HCT116 (cell line): ENCODE measurements at regions of chr11 and their contacts with region 1.

Region 1: DNA sequence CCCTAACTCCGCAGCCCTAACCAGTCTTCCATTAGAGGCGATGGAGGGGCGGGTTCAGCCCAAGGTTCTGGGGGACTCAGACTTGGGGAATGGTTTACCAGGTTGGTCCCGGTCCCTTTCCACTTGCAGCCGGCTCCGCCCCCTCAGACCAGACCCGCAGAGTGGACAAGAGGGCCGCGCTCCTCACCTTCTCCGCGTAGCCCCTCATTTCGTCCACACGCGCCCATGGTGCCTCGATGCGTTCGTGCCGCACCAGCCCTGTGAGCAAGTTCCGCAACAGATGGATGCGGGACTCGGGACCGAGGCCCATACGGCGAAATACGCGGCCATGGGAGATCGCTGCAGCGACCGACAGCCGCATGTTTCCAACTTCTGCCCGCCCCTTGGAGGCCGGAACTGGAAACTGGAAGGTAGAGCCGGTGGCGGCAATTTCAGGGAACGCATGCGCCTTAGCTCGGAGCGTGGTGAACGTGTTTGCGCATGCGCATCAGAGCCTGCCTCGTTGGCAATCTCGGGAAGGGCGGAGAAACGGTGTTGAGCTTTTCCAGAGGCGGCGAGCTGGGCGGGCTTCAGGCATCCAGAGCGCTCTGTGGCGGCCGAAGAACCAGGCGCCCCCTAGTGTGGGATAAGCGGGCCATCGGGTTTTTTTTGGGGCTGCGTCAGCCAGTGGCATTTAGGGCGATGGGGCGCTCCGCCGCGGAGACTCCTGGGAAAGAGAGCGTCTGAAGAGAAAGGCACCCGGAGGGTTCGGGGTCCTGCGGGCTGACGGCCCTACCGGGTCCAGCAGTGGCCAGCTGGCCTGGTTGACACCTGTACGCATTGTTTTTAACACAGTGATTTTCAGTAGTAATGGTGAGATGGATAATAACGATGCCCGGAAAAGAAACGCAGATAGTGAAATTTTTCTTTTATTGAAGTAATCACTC is at the start of gene MRPL17:
- DNase-seq: peak; percentile 99
- ATAC-seq: peak; percentile 96
- H3K4me3 ChIP-seq: peak within 1 kb of the TSS; percentile 71 to 92
- H3K27ac ChIP-seq: peak within 1 kb of the TSS; percentile 66
- H3K4me1 ChIP-seq: peaks cover 7 to 15% of the 10 kb centered on the region in 2 experiments; a peak in 3 of 4 replicates
- H3K27me3 ChIP-seq: no peaks in the 10 kb centered on the region
- CTCF ChIP-seq: peak; percentile 84 to 91 (median 85)
- POLR2A ChIP-seq: peak; percentile 95
- RAD21 ChIP-seq: peak; percentile 81
- total RNA-seq, gene MRPL17: 75.0 TPM

Region 2: DNA sequence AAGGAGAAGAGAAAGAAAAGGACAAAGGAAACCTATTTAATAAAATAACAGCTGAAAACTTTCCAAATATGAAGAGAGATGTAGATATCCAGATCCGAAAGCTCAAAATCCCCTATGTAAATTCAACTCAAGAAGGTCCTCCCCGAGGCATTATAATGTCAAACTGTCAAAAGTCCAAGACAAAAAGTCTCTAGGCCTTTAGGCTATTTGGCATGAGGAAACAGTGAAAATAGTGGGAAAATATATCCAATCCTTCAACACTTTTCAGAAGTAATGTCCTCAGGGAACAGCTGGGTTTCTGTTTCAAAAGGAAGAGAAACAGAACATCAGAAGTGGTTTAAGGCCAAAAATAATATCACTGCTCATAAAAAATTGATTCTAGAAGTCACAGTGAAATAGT is 804.6 kb before region 1 on chr11:
- CTCF ChIA-PET with region 1: no interaction called
- POLR2A ChIA-PET with region 1: no interaction called
- RAD21 ChIA-PET with region 1: no interaction called
- intact Hi-C with region 1: no loop called
- DNase-seq: no peak
- ATAC-seq: no peak
- H3K4me3 ChIP-seq: no peak overlapping the region
- H3K27ac ChIP-seq: no peak overlapping the region
- H3K4me1 ChIP-seq: no peaks in the 10 kb centered on the region
- H3K27me3 ChIP-seq: peaks cover 52% of the 10 kb centered on the region
- CTCF ChIP-seq: no peak
- POLR2A ChIP-seq: no peak
- RAD21 ChIP-seq: no peak

Region 3: GRCh38 chr11:6531267-6531752 is 151.9 kb before region 1 on chr11:
- CTCF ChIA-PET with region 1: interaction called, 17 read pairs
- POLR2A ChIA-PET with region 1: no interaction called
- RAD21 ChIA-PET with region 1: interaction called in 1 of 2 experiments, 6 read pairs
- intact Hi-C with region 1: loop called (anchors 1 kb)
- DNase-seq: peak; percentile 45
- ATAC-seq: peak; percentile 93
- H3K4me3 ChIP-seq: no peak overlapping the region
- H3K27ac ChIP-seq: no peak overlapping the region
- H3K4me1 ChIP-seq: no peaks in the 10 kb centered on the region
- H3K27me3 ChIP-seq: no peaks in the 10 kb centered on the region
- CTCF ChIP-seq: peak; percentile 72 to 86 (median 82)
- POLR2A ChIP-seq: no peak
- RAD21 ChIP-seq: peak; percentile 86

Region 4: DNA sequence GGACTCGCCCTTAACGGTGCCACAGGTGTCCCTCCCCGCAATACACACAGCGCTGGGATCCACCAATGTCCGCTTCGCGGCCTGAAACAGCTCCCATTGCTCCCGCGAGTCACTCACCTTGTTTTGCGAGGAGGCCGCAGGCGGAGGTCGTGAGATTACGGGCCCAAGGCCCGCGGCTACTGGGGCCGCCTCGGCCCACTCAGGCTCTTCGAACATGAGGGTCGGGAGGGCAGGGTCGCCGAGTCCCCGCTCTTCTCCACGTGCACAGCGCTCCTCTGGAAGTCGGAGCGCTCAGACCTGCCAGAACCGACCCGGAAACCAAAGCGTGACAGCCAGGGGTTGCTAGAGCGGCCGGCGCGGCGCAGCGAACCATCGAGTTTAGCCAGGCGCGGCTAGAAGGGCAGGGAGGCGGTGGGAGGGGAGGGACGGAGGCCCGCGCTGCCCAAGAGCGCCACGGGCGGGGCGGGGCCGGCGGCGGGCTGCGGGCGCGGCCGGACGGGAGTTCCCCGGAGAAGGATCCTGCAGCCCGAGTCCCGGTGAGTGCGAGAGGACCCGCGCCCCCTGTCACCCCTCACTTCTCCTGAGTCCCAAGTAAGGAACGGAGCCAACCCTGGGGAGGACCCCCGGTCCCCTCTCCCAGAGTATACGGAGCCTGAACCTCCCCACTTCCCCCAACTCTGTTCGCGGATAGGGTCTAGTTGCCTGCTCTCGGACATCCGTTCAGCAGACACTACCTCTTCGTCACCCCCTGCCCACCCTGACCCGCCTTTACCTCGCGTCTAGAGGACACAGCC is 79.7 kb before region 1 on chr11 and contains the starts of genes ILK and RRP8:
- CTCF ChIA-PET with region 1: interaction called, 4 read pairs
- POLR2A ChIA-PET with region 1: interaction called, 4 read pairs
- RAD21 ChIA-PET with region 1: no interaction called
- intact Hi-C with region 1: loop called (anchors 2 kb)
- DNase-seq: peak; percentile 68
- ATAC-seq: peak; percentile 88
- H3K4me3 ChIP-seq: peak within 1 kb of the TSS; percentile 81 to 96
- H3K27ac ChIP-seq: peak within 1 kb of the TSS; percentile 66
- H3K4me1 ChIP-seq: peaks cover 18 to 45% of the 10 kb centered on the region in 2 experiments
- H3K27me3 ChIP-seq: no peaks in the 10 kb centered on the region
- CTCF ChIP-seq: no peak
- POLR2A ChIP-seq: peak; percentile 68
- RAD21 ChIP-seq: no peak
- total RNA-seq, gene ILK: 73.5 TPM
- total RNA-seq, gene RRP8: 17.8 TPM

Region 5: DNA sequence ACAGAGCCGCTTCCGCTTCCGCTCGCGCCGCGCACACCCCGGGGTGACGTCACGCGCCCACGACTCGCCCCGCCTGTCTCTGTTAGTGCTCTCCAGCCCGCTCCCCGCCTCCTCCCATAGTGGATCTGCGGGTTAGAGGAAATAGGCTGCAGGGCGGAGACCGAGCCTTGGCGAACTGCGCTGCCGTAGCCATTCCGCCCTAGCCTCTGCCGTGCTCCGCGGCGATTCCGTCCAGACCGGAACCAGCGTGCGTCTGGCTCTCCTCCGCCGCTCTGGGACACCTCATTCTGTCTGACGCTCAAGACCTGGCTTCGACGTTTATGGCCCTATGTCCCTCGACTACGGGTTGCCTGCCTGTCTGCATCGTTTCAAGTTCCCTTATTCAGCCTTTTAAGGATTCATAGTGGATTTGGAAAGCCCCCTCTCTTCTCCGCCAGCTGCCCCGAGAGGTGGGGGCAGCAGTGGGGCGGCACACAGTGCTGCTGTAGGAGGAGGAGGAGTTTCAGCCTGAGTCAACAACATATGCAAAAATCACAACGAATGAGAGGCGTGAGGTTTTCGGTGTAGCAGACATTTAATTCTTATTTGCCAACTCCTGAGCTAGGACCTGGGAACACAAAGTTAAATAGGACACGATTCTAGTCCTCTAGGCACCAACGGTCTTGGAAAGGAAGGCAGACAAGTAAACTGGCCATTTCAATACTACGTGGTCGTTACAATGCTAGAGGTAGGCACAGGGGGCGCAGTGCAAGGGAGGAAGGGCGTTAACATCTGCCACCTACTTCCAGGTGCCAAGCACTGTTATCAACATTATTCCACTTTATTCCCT is 70.8 kb before region 1 on chr11 and contains the start of gene TAF10:
- CTCF ChIA-PET with region 1: interaction called, 11 read pairs
- POLR2A ChIA-PET with region 1: interaction called, 4 read pairs
- RAD21 ChIA-PET with region 1: no interaction called
- intact Hi-C with region 1: no loop called
- DNase-seq: peak; percentile 75
- ATAC-seq: peak; percentile 90
- H3K4me3 ChIP-seq: peak within 1 kb of the TSS; percentile 71 to 92
- H3K27ac ChIP-seq: peak within 1 kb of the TSS; percentile 93
- H3K4me1 ChIP-seq: peaks cover 7 to 31% of the 10 kb centered on the region in 2 experiments; a peak in 3 of 4 replicates
- H3K27me3 ChIP-seq: no peaks in the 10 kb centered on the region
- CTCF ChIP-seq: peak in 2 of 3 experiments; percentile 63 to 67; a peak in 4 of 6 replicates
- POLR2A ChIP-seq: peak; percentile 75
- RAD21 ChIP-seq: no peak
- total RNA-seq, gene TAF10: 151 TPM

Region 6: GRCh38 chr11:6667733-6668374 is 15.3 kb before region 1 on chr11:
- CTCF ChIA-PET with region 1: interaction called, 18 read pairs
- POLR2A ChIA-PET with region 1: interaction called, 7 read pairs
- RAD21 ChIA-PET with region 1: no interaction called
- intact Hi-C with region 1: no loop called
- DNase-seq: peak; percentile 38
- ATAC-seq: peak; percentile 94
- H3K4me3 ChIP-seq: no peak overlapping the region
- H3K27ac ChIP-seq: no peak overlapping the region
- H3K4me1 ChIP-seq: peaks cover 0 to 4% of the 10 kb centered on the region in 2 experiments; a peak in 2 of 4 replicates
- H3K27me3 ChIP-seq: no peaks in the 10 kb centered on the region
- CTCF ChIP-seq: peak; percentile 61 to 63 (median 63); a peak in 5 of 6 replicates
- POLR2A ChIP-seq: no peak
- RAD21 ChIP-seq: peak; percentile 49